Activated CD4-positive, alpha-beta memory T cell treated with anti-CD3 and anti-CD28 coated beads for 36 hours (primary cell): ENCODE measurements at regions of chr17 and their contacts with region 1.

Region 1: DNA sequence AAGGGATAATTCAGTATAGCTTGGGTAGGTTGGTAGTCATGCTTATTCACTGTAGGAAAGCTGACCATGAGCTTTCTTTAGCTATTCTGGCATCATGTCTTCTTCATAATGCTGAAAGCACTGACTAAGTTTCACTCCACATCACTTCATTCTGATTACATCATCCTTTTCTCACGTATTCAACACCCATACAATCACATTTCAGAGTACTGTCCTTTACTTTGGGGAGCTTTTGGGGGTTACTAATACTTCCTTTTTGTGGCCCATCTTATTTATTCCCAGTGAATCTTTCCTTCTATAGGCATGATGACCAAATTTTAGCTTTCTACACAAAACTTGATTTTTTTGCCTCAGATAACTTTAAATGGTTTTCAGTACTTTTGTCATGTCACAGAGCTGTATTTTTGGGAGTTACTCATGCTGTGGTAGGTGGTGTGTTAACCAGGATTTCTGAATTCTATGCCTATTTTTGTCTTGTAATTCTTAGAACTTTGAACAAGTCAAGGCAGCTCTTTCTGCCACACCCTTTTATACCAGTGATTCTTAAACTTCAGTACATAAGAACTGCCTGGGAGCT is 23.5 kb downstream of the TADA2A start:
- DNase-seq: no peak
- H3K4me3 Mint-ChIP-seq: peak overlapping the region; percentile 54
- H3K27ac Mint-ChIP-seq: peak overlapping the region; percentile 97
- H3K4me1 Mint-ChIP-seq: peaks cover 32% of the 10 kb centered on the region
- H3K27me3 Mint-ChIP-seq: no peaks in the 10 kb centered on the region

Region 2: GRCh38 chr17:37461668-37462067 is 31.5 kb after region 1 on chr17:
- CTCF ChIA-PET with region 1: interaction called, 3 read pairs
- POLR2A ChIA-PET with region 1: interaction called, 4 read pairs
- intact Hi-C with region 1: loop called (anchors 2 kb)
- DNase-seq: peak; percentile 13
- H3K4me3 Mint-ChIP-seq: no peak overlapping the region
- H3K27ac Mint-ChIP-seq: peak overlapping the region; percentile 63
- H3K4me1 Mint-ChIP-seq: peaks cover 15% of the 10 kb centered on the region
- H3K27me3 Mint-ChIP-seq: no peaks in the 10 kb centered on the region

Region 3: DNA sequence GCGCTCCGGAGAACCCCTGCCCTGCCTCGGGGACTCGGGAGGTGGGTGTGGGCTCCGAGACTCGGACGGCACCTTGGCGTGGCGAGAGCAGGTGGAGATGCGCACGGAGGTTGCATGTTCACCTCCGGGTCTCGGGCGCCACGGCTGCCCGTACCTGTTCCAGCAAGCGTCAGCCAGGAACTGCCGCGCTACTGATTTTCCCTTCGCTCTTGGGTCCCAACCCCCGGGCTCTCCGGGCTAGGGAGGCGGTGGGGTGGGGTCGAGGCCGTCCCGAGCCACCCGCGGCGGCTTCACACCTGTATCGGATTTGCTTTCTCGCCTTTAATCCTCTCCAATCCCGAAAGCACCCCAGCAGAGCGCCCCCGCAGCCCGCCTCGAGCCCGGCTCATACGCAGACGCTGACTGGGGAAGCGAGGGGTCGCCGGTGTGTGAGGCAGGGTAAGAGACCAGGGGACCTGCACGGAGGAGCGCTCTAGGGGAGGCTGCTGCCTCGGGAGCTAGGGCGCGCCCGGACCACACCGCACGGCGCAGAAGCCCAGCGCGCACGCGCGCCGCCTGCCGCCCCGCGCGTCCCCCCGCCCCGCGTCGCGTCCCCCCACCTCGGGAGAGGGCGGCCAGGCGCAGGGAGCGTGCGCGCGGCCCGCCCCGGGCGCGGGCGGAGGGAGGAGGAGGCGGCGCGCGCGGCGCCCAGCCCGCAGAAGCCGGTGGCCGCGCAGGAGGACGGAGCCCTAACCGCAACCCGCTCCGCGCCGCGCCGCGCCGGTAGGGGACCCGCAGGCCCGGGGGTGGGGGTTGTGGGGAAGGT is 59.3 kb after region 1 on chr17 and contains the start of gene DUSP14:
- CTCF ChIA-PET with region 1: no interaction called
- POLR2A ChIA-PET with region 1: interaction called, 6 read pairs
- intact Hi-C with region 1: loop called (anchors 2 kb)
- DNase-seq: peak; percentile 84
- H3K4me3 Mint-ChIP-seq: peak within 1 kb of the TSS; percentile 90
- H3K27ac Mint-ChIP-seq: peak within 1 kb of the TSS; percentile 88
- H3K4me1 Mint-ChIP-seq: peaks cover 47% of the 10 kb centered on the region
- H3K27me3 Mint-ChIP-seq: no peaks in the 10 kb centered on the region
- total RNA-seq, gene DUSP14: 17.4 to 19.0 TPM